ENCODE measurements at regions of chr11 and their contacts with region 1.

Region 1: DNA sequence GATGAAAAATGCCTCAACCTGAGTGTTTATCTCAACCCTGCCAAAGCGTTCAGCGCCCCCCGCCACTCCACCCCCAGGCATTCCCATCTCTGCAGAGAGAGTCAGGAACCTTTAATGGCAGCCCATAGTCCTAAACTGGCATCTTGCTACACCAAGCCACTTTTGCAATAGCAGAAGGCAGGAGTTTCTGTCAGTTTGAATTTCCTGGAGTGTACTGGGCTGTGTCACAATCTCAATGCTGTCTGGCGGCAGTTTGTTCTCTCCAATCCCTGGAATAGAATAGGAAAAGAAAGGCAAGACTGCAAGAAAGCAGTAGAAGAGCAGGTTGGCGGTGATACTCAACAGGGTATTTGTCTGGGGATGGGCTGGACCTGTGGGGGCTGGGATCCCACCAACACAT is 32.9 kb upstream of the FLI1 start:
- DNase-seq: no peak
- H3K4me3 Mint-ChIP-seq: no peak overlapping the region
- H3K27ac Mint-ChIP-seq: no peak overlapping the region
- H3K4me1 Mint-ChIP-seq: no peaks in the 10 kb centered on the region
- H3K27me3 Mint-ChIP-seq: peaks cover 2% of the 10 kb centered on the region

Region 2: GRCh38 chr11:127259102-127259501 is 1401.8 kb before region 1 on chr11:
- CTCF ChIA-PET with region 1: no interaction called
- intact Hi-C with region 1: no loop called
- DNase-seq: no peak
- H3K4me3 Mint-ChIP-seq: no peak overlapping the region
- H3K27ac Mint-ChIP-seq: no peak overlapping the region
- H3K4me1 Mint-ChIP-seq: no peaks in the 10 kb centered on the region
- H3K27me3 Mint-ChIP-seq: peaks cover 2% of the 10 kb centered on the region

Region 3: DNA sequence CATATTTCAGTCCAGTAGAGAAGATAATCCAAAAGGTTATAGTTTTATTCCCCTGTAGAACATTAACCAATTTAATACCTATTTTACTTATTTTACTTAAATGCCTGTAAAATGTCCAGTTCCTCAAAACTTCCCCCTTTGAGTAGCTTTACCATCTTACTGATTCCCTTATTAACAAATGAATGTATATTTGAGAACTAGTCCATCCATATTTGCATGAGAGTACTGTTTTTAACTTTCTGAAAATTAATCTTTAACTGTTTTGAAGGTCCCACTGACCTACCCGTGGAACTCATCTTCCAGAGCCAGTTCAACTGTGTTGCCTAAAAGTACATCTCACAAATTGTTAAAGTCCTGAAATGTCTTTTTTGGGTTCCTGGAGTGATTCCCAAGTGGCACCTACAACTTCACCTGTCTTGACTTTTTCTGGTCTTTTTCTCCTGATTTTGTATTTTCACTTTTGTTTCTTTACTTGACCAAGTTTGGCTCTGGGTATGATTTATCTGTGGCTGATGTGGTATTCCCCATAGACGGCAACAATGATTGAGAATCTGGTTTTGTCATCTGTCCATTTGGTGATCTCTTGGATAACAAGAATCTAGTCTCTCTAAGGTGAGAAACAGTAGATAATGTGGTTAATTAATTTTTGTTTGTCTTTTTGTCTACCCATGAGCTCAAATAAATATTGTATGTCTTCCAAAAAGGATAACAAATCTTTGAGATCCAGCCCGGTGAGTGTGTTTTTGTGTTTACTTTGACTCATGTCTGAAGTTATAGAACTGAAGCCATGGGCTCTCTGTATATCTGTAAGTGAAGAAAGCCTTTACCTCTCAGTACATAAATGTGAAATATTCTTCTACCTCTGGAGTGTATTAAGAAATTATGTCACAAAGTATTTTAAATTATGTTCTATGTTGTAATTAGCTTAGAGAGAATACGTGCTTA is 247.8 kb before region 1 on chr11:
- CTCF ChIA-PET with region 1: no interaction called
- intact Hi-C with region 1: no loop called
- DNase-seq: no peak
- H3K4me3 Mint-ChIP-seq: no peak overlapping the region
- H3K27ac Mint-ChIP-seq: peak overlapping the region; percentile 2
- H3K4me1 Mint-ChIP-seq: peaks cover 72% of the 10 kb centered on the region
- H3K27me3 Mint-ChIP-seq: no peaks in the 10 kb centered on the region

Region 4: DNA sequence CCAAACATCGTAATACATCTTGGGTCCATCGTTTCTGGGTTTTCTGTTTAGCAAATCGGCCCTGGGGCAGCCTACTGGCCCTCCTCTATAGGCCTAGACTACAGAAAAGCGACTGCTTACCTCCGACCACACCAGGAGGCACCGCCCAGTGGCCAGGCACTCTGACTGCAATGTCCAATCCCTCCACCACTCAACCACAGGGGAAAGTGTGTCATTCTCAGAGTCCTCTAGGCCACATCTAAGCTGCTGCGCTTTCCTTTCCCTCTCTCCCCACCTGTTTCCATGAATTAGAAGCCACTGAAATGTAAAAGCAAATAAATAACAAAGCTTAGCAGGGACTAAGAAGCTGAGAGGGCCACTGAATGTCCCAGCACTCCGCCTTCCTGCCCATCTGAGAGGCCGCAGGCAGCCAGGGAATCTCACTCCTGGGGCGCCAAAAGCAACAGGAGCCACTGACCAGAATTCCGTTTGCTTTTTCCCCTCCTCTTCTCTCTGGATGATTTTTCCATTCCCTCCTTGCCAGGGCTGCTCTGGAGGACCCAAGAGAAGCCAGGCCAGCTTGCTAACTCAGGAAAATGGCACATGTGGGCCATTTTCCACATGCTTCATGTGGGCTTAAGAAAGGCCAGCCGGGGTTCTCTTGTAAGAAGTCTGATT is 17.2 kb before region 1 on chr11:
- CTCF ChIA-PET with region 1: no interaction called
- intact Hi-C with region 1: loop called (anchors 2 kb)
- DNase-seq: no peak
- H3K4me3 Mint-ChIP-seq: no peak overlapping the region
- H3K27ac Mint-ChIP-seq: no peak overlapping the region
- H3K4me1 Mint-ChIP-seq: peaks cover 16% of the 10 kb centered on the region
- H3K27me3 Mint-ChIP-seq: no peaks in the 10 kb centered on the region